H1 (cell line): ENCODE measurements at regions of chr5 and their contacts with region 1.

Region 1: DNA sequence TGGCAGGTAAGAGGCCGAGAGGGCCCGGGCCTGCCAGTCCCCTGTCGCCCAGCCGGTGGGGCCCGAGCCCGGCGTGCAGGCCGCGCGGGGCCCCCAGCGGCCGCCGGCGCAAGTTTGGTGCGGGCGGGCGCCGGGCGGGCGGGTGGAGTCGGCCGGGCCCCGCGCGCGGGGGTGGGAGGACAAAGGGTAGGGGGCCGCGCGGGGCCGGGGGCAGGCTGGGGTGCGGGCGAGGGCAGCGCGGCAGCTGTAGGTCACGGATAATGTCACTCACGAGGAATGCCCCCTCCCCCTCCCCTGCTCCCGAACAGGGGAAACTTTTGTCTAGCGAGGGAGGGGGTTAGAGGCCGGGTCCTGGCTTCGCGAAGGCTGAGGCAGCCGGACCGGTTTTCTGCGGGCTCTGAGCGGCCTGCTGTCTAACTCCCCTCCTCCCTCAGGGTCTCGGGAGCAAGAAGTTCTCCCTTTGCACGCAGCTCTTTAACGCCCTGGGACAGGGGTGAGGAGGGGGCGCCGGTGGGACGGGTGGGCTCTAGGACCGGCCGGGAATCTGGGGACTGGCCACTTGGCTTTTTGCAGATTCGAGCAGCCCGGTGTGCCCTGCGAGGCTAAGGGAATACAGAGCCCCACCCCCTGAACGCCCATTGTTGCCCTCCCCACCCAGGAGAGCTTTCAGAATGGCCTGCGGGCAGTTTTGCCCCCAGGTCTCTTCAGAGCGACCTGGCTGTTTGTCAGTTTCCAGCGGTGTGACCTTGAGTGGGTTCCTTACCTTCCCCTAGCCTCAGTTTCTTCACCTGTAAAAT is 21.3 kb upstream of the NDST1 start:
- DNase-seq: peak; percentile 63 to 86
- H3K4me3 ChIP-seq: peak overlapping the region; percentile 50 to 99 (median 74)
- H3K27ac ChIP-seq: peak overlapping the region; percentile 35; the same call in 1 of the 2 replicates
- H3K4me1 ChIP-seq: peaks cover 18 to 51% (median 41%) of the 10 kb centered on the region in 4 experiments
- H3K27me3 ChIP-seq: no peaks in the 10 kb centered on the region
- CTCF ChIP-seq: peak in 1 of 3 experiments; percentile 24; a peak in 2 of 4 replicates
- EP300 ChIP-seq: peak in 1 of 2 experiments; percentile 18; a peak in 1 of 3 replicates
- POLR2A ChIP-seq: peak in 1 of 2 experiments; percentile 14; a peak in 1 of 3 replicates
- RAD21 ChIP-seq: peak in 1 of 2 experiments; percentile 25; a peak in 1 of 4 replicates

Region 2: DNA sequence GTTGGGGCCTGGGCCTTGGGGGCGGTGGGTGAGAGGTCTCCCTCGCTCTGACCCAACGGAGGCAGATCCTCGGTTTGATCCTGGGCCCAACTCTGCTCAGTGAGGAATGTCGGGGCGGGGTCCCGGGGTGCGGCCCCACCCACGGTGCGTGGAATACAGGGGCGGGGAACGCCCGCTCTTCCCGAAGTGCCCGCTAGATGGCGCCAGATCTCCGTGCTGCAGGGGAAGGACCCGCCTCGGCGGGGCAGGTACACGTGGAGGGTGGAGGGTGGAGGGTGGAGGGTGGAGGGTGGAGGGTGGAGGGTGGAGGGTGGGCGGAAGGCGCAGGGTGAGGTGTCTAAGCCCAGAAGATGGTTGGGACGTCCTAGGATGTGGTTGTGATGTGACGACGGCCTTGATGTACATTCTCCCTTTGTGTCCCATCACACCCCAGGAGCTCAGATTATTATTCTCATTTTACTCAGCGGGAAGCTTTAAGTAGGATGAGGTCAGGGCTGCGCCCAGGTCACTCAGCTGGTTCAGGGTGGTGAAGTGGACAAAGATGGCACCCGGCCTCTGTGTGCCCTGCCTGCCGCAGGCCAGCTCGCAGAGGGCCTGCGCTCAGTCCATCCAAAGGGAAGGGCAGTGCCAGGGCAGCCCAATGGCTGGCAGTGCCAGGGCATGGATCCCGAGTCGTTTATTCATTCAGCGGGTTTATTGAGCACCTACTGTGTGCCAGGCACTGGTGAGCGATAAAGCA is 27.6 kb before region 1 on chr5:
- CTCF ChIA-PET with region 1: interaction called, 13 read pairs
- POLR2A ChIA-PET with region 1: interaction called, 18 read pairs
- DNase-seq: peak in 1 of 2 experiments; percentile 99
- H3K4me3 ChIP-seq: peak overlapping the region in 1 of 4 experiments; percentile 47; a peak in 2 of 8 replicates
- H3K27ac ChIP-seq: no peak overlapping the region
- H3K4me1 ChIP-seq: peaks cover 4 to 20% (median 9%) of the 10 kb centered on the region in 4 experiments
- H3K27me3 ChIP-seq: no peaks in the 10 kb centered on the region
- CTCF ChIP-seq: peak; percentile 69 to 92 (median 89)
- EP300 ChIP-seq: 0 out of 3 replicates have a peak, but pooled peaks of 1 of the 2 experiments have one; percentile 3
- POLR2A ChIP-seq: no peak
- RAD21 ChIP-seq: peak; percentile 89 to 91

Region 3: DNA sequence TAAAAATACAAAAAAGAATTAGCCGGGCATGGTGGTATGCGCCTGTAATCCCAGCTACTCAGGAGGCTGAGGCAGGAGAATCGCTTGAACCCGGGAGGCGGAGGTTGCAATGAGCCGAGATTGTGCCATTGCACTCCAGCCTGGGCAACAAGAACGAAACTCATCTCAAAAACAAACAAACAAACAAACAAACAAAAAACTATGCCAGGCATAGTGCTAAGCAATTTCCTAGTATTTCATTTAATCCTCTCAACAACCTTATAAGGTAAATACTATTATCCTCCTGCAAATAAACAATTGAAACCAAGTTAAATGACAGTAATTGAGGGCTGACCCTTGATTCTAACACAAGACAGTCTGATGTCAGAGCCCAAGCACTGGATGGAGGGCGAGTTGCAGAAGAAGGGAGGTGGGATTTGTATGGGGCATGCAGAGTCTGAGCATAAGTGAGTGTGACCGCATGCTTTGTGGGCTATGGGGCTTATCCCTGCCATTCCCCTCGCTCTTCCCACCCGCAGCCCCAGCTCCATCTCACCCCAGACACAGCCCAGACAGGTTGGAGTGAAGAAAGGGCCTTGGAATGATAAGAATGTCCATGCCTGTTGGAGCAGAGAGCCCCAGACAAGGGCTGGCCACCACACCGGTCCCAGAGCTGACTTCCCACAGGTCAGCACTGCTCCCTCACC is 12.8 kb before region 1 on chr5:
- CTCF ChIA-PET with region 1: interaction called, 571 read pairs
- POLR2A ChIA-PET with region 1: interaction called, 29 read pairs
- DNase-seq: peak in 1 of 2 experiments; percentile 82
- H3K4me3 ChIP-seq: no peak overlapping the region
- H3K27ac ChIP-seq: no peak overlapping the region
- H3K4me1 ChIP-seq: peaks cover 0 to 18% (median 5%) of the 10 kb centered on the region in 4 experiments; a peak in 6 of 7 replicates
- H3K27me3 ChIP-seq: no peaks in the 10 kb centered on the region
- CTCF ChIP-seq: no peak
- EP300 ChIP-seq: no peak
- POLR2A ChIP-seq: no peak
- RAD21 ChIP-seq: no peak

Region 4: GRCh38 chr5:150503977-150504620 is 17.5 kb after region 1 on chr5:
- CTCF ChIA-PET with region 1: interaction called, 571 read pairs
- POLR2A ChIA-PET with region 1: interaction called, 122 read pairs
- DNase-seq: no peak
- H3K4me3 ChIP-seq: no peak overlapping the region
- H3K27ac ChIP-seq: no peak overlapping the region
- H3K4me1 ChIP-seq: peaks cover 10 to 23% (median 13%) of the 10 kb centered on the region in 4 experiments; a peak in 6 of 7 replicates
- H3K27me3 ChIP-seq: no peaks in the 10 kb centered on the region
- CTCF ChIP-seq: no peak
- EP300 ChIP-seq: no peak
- POLR2A ChIP-seq: no peak
- RAD21 ChIP-seq: no peak

Region 5: DNA sequence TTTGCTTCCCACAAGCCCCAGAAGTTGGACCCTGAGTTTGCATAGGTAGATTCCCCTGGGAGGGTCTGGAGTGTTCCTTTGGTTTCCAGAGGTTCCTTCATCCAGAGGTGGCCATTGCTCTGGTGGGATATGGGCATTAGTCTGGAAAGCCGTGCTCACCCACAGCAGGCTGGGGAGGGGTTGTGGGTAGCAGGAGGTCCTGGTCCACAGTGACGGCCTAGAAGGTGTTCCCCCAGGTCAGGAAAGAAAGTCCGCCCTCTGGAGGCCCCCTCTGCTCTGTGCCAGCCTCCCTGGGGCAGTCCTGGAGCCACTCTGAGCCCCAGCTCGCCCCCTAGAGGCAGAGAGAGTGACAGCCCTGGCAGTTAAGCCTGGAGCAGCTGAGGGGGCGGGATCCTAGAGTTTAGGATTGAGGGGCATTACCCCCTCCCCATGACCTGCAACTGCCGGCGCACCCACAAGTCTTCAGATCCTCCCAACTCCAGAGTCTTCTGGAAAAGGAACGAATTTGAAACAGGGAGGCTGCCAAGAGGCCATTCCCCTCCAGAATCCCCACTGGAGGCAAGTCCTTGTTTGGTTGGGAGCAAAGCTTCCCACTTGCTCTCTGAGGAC is 58.1 kb after region 1 on chr5:
- CTCF ChIA-PET with region 1: interaction called, 46 read pairs
- POLR2A ChIA-PET with region 1: interaction called, 3 read pairs
- DNase-seq: peak; percentile 67 to 97
- H3K4me3 ChIP-seq: no peak overlapping the region
- H3K27ac ChIP-seq: 0 out of 2 replicates have a peak overlapping the region, but pooled peaks have one; percentile 14
- H3K4me1 ChIP-seq: no peaks in the 10 kb centered on the region; a peak in 1 of 7 replicates
- H3K27me3 ChIP-seq: no peaks in the 10 kb centered on the region
- CTCF ChIP-seq: peak; percentile 99 to 100 (median 99)
- EP300 ChIP-seq: no peak
- POLR2A ChIP-seq: 0 out of 3 replicates have a peak, but pooled peaks of 1 of the 2 experiments have one; percentile 30
- RAD21 ChIP-seq: peak; percentile 81 to 89